Heart left ventricle (tissue), 16 donors: ENCODE measurements at regions of chr14 and their contacts with region 1.

Region 1: GRCh38 chr14:31510222-31510621 is 22.4 kb upstream of the GPR33 start:
- DNase-seq: no peak
- ATAC-seq: peak in 1 of 4 donors; percentile 22
- H3K4me3 ChIP-seq: no peak overlapping the region
- H3K27ac ChIP-seq: no peak overlapping the region
- H3K4me1 ChIP-seq: peaks cover 0 to 13% (median 8%) of the 10 kb centered on the region in 12 donors
- H3K27me3 ChIP-seq: no peaks in the 10 kb centered on the region
- CTCF ChIP-seq: peak; percentile 52 to 90 (median 68)
- POLR2A ChIP-seq: no peak

Region 2: DNA sequence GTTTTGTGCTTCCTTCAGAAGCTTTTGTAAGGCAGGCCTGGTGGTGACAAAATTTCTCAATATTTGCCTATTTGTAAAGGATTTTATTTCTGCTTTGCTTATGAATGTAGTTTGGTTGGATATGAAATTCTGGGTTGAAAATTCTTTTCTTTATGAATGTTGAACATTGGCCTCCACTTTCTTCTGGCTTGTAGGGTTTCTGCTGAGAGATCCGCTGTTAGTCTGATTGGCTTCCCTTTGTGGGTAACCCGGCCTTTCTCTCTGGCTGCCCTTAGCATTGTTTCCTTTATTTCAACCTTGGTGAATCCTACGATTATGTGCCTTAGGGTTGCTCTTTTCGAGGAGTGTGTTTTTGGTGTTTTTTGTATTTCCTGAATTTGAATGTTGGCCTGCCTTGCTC is 109.2 kb after region 1 on chr14:
- intact Hi-C with region 1: no loop called
- DNase-seq: no peak
- ATAC-seq: no peak
- H3K4me3 ChIP-seq: no peak overlapping the region
- H3K27ac ChIP-seq: no peak overlapping the region
- H3K4me1 ChIP-seq: no peaks in the 10 kb centered on the region
- H3K27me3 ChIP-seq: no peaks in the 10 kb centered on the region
- CTCF ChIP-seq: no peak
- POLR2A ChIP-seq: no peak

Region 3: DNA sequence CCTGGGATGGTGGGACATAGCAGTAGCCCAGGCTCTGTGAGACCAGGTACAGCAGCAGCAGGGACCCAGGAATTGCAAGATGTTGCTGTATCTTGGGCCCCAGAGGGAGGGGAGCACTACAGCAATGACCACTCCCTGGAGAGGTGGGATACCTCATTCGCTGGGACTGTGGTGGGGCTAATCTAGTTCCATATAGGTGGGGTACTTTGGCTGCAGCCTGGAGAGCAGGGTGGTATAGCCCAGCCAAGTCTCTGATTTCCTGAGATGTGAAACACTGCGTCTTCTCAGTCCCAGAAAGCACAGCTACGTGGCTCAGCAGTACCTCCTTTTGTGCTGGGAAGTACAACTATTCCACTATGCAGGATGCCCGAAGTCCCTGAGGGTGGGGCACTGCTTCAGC is 403.1 kb after region 1 on chr14:
- intact Hi-C with region 1: no loop called
- DNase-seq: no peak
- ATAC-seq: peak in 1 of 4 donors; percentile 22
- H3K4me3 ChIP-seq: no peak overlapping the region
- H3K27ac ChIP-seq: no peak overlapping the region
- H3K4me1 ChIP-seq: no peaks in the 10 kb centered on the region
- H3K27me3 ChIP-seq: no peaks in the 10 kb centered on the region
- CTCF ChIP-seq: no peak
- POLR2A ChIP-seq: no peak

Region 4: GRCh38 chr14:32064931-32065330 is 554.7 kb after region 1 on chr14:
- intact Hi-C with region 1: loop called in 2 of 10 experiments (anchors 10 kb)
- DNase-seq: no peak
- ATAC-seq: no peak
- H3K4me3 ChIP-seq: no peak overlapping the region
- H3K27ac ChIP-seq: no peak overlapping the region
- H3K4me1 ChIP-seq: no peaks in the 10 kb centered on the region
- H3K27me3 ChIP-seq: no peaks in the 10 kb centered on the region
- CTCF ChIP-seq: no peak
- POLR2A ChIP-seq: no peak

Region 5: DNA sequence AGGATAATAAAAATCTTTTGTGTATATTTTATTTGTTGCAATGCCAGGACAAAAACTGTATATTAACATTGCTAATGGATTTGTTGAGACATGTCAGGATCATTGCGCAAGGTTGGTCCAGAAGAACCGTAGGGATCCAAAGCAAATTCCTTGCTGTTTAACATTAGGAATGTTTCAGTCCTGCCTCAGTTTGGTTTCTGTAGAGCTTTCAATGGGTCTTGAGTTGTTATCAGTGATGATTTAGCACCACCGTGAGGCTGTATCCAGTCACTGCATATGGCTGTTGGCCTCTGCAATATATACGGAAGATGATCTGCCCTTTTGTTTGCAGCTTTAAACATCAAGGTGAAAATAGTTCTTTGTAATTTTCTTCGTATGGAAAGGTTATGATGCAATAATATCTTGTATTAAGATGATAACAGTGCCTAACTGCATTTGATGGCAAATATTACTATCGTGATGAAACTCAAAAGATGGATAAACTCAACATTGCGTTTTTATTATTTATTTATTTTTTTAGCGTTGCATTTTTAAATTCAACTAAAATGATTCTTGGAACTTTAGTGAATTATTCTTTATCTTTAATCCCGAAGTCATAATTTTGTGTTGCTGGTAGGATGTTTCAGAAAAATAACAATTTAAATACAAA is 1050.1 kb after region 1 on chr14:
- intact Hi-C with region 1: loop called in 1 of 10 experiments (anchors 5 kb)
- DNase-seq: peak in 3 of 5 donors; percentile 29 to 42 (median 39)
- ATAC-seq: peak; percentile 46 to 83 (median 73)
- H3K4me3 ChIP-seq: no peak overlapping the region
- H3K27ac ChIP-seq: peak overlapping the region in 10 of 12 donors; percentile 9 to 71 (median 44)
- H3K4me1 ChIP-seq: peaks cover 0 to 54% (median 21%) of the 10 kb centered on the region in 12 donors
- H3K27me3 ChIP-seq: no peaks in the 10 kb centered on the region
- CTCF ChIP-seq: peak; percentile 67 to 92 (median 80)
- POLR2A ChIP-seq: no peak